ENCODE measurements at regions of chr1 and their contacts with region 1.

Region 1: GRCh38 chr1:67659229-67659628 is 25.8 kb upstream of the GADD45A start:
- DNase-seq: no peak
- H3K4me3 ChIP-seq: no peak overlapping the region
- H3K4me3 Mint-ChIP-seq: no peak overlapping the region
- H3K27ac Mint-ChIP-seq: no peak overlapping the region
- H3K4me1 ChIP-seq: peaks cover 8% of the 10 kb centered on the region
- H3K4me1 Mint-ChIP-seq: peaks cover 10% of the 10 kb centered on the region
- H3K27me3 ChIP-seq: no peaks in the 10 kb centered on the region
- H3K27me3 Mint-ChIP-seq: no peaks in the 10 kb centered on the region
- CTCF ChIP-seq: no peak

Region 2: GRCh38 chr1:67561704-67562113 is 97.5 kb before region 1 on chr1:
- CTCF ChIA-PET with region 1: no interaction called
- POLR2A ChIA-PET with region 1: no interaction called
- intact Hi-C with region 1: loop called (anchors 1 kb)
- DNase-seq: peak; percentile 90 to 92
- H3K4me3 ChIP-seq: no peak overlapping the region
- H3K4me3 Mint-ChIP-seq: no peak overlapping the region
- H3K27ac Mint-ChIP-seq: no peak overlapping the region
- H3K4me1 ChIP-seq: peaks cover 16% of the 10 kb centered on the region; the same call in 1 of the 2 replicates
- H3K4me1 Mint-ChIP-seq: no peaks in the 10 kb centered on the region
- H3K27me3 ChIP-seq: no peaks in the 10 kb centered on the region
- H3K27me3 Mint-ChIP-seq: no peaks in the 10 kb centered on the region
- CTCF ChIP-seq: peak; percentile 73 to 77

Region 3: GRCh38 chr1:67629370-67630075 is 29.7 kb before region 1 on chr1:
- CTCF ChIA-PET with region 1: no interaction called
- POLR2A ChIA-PET with region 1: no interaction called
- intact Hi-C with region 1: no loop called
- DNase-seq: no peak
- H3K4me3 ChIP-seq: no peak overlapping the region
- H3K4me3 Mint-ChIP-seq: no peak overlapping the region
- H3K27ac Mint-ChIP-seq: no peak overlapping the region
- H3K4me1 ChIP-seq: peaks cover 50% of the 10 kb centered on the region
- H3K4me1 Mint-ChIP-seq: peaks cover 28% of the 10 kb centered on the region
- H3K27me3 ChIP-seq: no peaks in the 10 kb centered on the region
- H3K27me3 Mint-ChIP-seq: no peaks in the 10 kb centered on the region
- CTCF ChIP-seq: no peak